IMR-90 (cell line): ENCODE measurements at regions of chr12 and their contacts with region 1.

Region 1: GRCh38 chr12:105382771-105383622 is 52.5 kb downstream of the C12orf75 start:
- DNase-seq: peak; percentile 73
- ATAC-seq: peak; percentile 82
- H3K4me3 ChIP-seq: no peak overlapping the region
- H3K27ac ChIP-seq: peak overlapping the region; percentile 50; the same call in 1 of the 2 replicates
- H3K4me1 ChIP-seq: peaks cover 9% of the 10 kb centered on the region
- H3K27me3 ChIP-seq: no peaks in the 10 kb centered on the region
- CTCF ChIP-seq: peak; percentile 83
- POLR2A ChIP-seq: no peak
- RAD21 ChIP-seq: peak; percentile 90

Region 2: DNA sequence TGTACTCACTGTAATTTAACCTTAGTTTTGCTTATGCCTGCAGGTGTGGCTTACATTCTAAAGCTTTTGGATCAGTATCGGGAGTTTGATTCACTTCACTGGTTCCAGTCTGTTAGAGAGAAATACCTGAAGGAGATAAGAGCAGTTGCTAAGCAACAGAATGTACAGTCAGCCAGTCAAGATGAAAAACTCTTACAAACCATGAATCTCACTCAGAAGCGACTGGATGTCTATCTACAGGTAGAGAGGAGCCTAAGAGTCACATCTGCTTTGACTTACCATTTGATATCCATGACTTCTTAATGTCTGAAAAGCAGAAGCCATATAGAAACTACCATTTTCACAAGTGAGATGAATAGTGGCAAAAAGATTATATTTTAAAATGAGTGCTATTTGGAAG is 218.9 kb before region 1 on chr12:
- CTCF ChIA-PET with region 1: interaction called, 3 read pairs
- POLR2A ChIA-PET with region 1: no interaction called
- dilution Hi-C with region 1: no loop called
- in situ Hi-C with region 1: no loop called
- intact Hi-C with region 1: loop called (anchors 5 kb)
- DNase-seq: no peak
- ATAC-seq: no peak
- H3K4me3 ChIP-seq: no peak overlapping the region
- H3K27ac ChIP-seq: no peak overlapping the region
- H3K4me1 ChIP-seq: peaks cover 4% of the 10 kb centered on the region
- H3K27me3 ChIP-seq: no peaks in the 10 kb centered on the region
- CTCF ChIP-seq: no peak
- POLR2A ChIP-seq: no peak
- RAD21 ChIP-seq: no peak

Region 3: GRCh38 chr12:105198961-105199360 is 184.0 kb before region 1 on chr12:
- CTCF ChIA-PET with region 1: no interaction called
- POLR2A ChIA-PET with region 1: no interaction called
- dilution Hi-C with region 1: no loop called
- in situ Hi-C with region 1: loop called (anchors 25 kb)
- intact Hi-C with region 1: loop called (anchors 2 kb)
- DNase-seq: no peak
- ATAC-seq: no peak
- H3K4me3 ChIP-seq: no peak overlapping the region
- H3K27ac ChIP-seq: peak overlapping the region; percentile 0; the same call in 1 of the 2 replicates
- H3K4me1 ChIP-seq: peaks cover 8% of the 10 kb centered on the region
- H3K27me3 ChIP-seq: no peaks in the 10 kb centered on the region
- CTCF ChIP-seq: no peak
- POLR2A ChIP-seq: no peak
- RAD21 ChIP-seq: no peak

Region 4: DNA sequence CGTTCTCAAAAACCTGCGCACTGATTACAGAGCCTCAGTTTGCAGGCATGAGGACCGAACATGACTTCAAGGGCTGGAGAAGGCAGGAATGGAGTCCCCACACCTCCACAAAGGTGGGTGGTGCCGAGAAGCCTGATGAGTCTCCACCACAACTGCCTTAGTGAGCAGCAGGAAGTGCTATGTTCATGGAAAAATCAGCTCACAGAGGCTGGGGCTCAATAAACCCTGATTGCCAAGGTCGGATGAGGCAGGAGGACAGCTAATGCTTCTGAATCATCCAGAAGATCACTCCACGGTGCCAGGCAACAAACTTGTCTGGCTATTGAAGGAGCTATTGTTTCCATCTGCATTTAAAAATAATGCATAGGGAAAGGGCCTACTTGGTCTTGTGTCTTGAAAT is 178.1 kb before region 1 on chr12:
- CTCF ChIA-PET with region 1: no interaction called
- POLR2A ChIA-PET with region 1: no interaction called
- dilution Hi-C with region 1: no loop called
- in situ Hi-C with region 1: loop called (anchors 25 kb)
- intact Hi-C with region 1: no loop called
- DNase-seq: peak; percentile 84
- ATAC-seq: peak; percentile 40
- H3K4me3 ChIP-seq: no peak overlapping the region
- H3K27ac ChIP-seq: no peak overlapping the region
- H3K4me1 ChIP-seq: peaks cover 12% of the 10 kb centered on the region
- H3K27me3 ChIP-seq: no peaks in the 10 kb centered on the region
- CTCF ChIP-seq: no peak
- POLR2A ChIP-seq: no peak
- RAD21 ChIP-seq: no peak

Region 5: DNA sequence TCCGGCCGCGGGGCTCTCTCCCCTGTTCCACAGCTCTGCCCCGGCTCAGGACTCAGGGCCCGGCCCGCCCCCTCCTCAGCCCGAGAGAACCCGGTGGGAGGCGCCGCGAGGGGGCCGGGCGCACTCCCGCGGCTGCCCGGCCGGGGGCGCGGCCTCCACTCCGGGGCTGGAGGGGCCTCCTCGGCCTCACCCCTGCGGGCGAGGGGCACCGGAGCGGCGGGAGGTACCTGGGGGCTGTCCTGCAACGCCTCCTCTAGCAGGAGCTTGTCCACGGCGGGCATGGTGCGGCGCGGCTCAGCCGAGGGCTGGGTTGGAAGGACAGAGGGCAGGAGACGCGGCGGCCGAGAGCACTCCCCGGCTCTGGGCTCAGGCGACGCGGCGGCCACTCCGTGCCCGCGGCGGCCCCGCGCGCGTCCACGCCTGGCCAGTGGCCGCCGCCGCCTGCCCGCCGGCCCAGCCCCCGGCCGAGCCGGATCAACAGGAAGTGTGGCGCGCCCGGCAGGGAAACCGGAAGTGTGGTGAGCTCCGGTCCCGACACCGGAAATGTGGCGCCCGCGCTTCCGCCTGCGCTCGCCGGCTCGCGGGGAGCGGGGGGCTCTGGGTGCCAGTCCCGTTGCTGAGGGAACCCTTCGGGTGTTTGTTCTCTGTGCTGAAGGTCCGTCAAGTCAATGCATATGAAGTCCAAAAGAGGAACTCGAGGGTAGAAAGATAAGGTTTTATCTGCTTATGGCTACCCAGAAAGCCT is 147.1 kb before region 1 on chr12 and contains the start of gene APPL2:
- CTCF ChIA-PET with region 1: interaction called, 3 read pairs
- POLR2A ChIA-PET with region 1: no interaction called
- dilution Hi-C with region 1: no loop called
- in situ Hi-C with region 1: no loop called
- intact Hi-C with region 1: loop called (anchors 2 kb)
- DNase-seq: peak; percentile 87
- ATAC-seq: peak; percentile 94
- H3K4me3 ChIP-seq: peak within 1 kb of the TSS; percentile 93
- H3K27ac ChIP-seq: peak within 1 kb of the TSS; percentile 95
- H3K4me1 ChIP-seq: peaks cover 9% of the 10 kb centered on the region
- H3K27me3 ChIP-seq: no peaks in the 10 kb centered on the region
- CTCF ChIP-seq: peak; percentile 45
- POLR2A ChIP-seq: peak; percentile 79; the same call in 1 of the 2 replicates
- RAD21 ChIP-seq: peak; percentile 28
- total RNA-seq, gene APPL2: 42.3 and 53.3 TPM in 2 replicates

Region 6: GRCh38 chr12:105330283-105330930 is 52.6 kb before region 1 on chr12 and contains the start of gene C12orf75:
- CTCF ChIA-PET with region 1: no interaction called
- POLR2A ChIA-PET with region 1: no interaction called
- dilution Hi-C with region 1: no loop called
- in situ Hi-C with region 1: no loop called
- intact Hi-C with region 1: loop called (anchors 2 kb)
- DNase-seq: peak; percentile 68
- ATAC-seq: peak; percentile 92
- H3K4me3 ChIP-seq: peak within 1 kb of the TSS; percentile 96
- H3K27ac ChIP-seq: peak within 1 kb of the TSS; percentile 91
- H3K4me1 ChIP-seq: peaks cover 18% of the 10 kb centered on the region
- H3K27me3 ChIP-seq: no peaks in the 10 kb centered on the region
- CTCF ChIP-seq: no peak
- POLR2A ChIP-seq: no peak
- RAD21 ChIP-seq: no peak
- total RNA-seq, gene C12orf75: 145 and 216 TPM in 2 replicates